HepG2 (cell line): ENCODE measurements at regions of chr18 and their contacts with region 1.

Region 1: GRCh38 chr18:33231474-33232317 is 208.8 kb downstream of the CCDC178 start:
- DNase-seq: peak; percentile 75
- ATAC-seq: peak; percentile 98
- H3K4me3 ChIP-seq: no peak overlapping the region
- H3K27ac ChIP-seq: no peak overlapping the region
- H3K4me1 ChIP-seq: no peaks in the 10 kb centered on the region
- H3K27me3 ChIP-seq: no peaks in the 10 kb centered on the region
- CTCF ChIP-seq: peak; percentile 85
- EP300 ChIP-seq: no peak
- POLR2A ChIP-seq: no peak
- RAD21 ChIP-seq: peak; percentile 46; the same call in 1 of the 2 replicates

Region 2: GRCh38 chr18:33195795-33196194 is 35.9 kb before region 1 on chr18:
- CTCF ChIA-PET with region 1: no interaction called
- POLR2A ChIA-PET with region 1: no interaction called
- in situ Hi-C with region 1: no loop called
- intact Hi-C with region 1: no loop called
- DNase-seq: no peak
- ATAC-seq: no peak
- H3K4me3 ChIP-seq: no peak overlapping the region
- H3K27ac ChIP-seq: no peak overlapping the region
- H3K4me1 ChIP-seq: no peaks in the 10 kb centered on the region
- H3K27me3 ChIP-seq: no peaks in the 10 kb centered on the region
- CTCF ChIP-seq: no peak
- EP300 ChIP-seq: no peak
- POLR2A ChIP-seq: no peak
- RAD21 ChIP-seq: no peak

Region 3: GRCh38 chr18:33316146-33316587 is 84.5 kb after region 1 on chr18:
- CTCF ChIA-PET with region 1: no interaction called
- POLR2A ChIA-PET with region 1: no interaction called
- in situ Hi-C with region 1: no loop called
- intact Hi-C with region 1: loop called (anchors 1 kb)
- DNase-seq: no peak
- ATAC-seq: peak; percentile 77
- H3K4me3 ChIP-seq: no peak overlapping the region
- H3K27ac ChIP-seq: no peak overlapping the region
- H3K4me1 ChIP-seq: no peaks in the 10 kb centered on the region
- H3K27me3 ChIP-seq: no peaks in the 10 kb centered on the region; a peak in 1 of 5 replicates
- CTCF ChIP-seq: peak; percentile 38; the same call in 1 of the 2 replicates
- EP300 ChIP-seq: no peak
- POLR2A ChIP-seq: no peak
- RAD21 ChIP-seq: no peak

Region 4: GRCh38 chr18:33495278-33495677 is 263.6 kb after region 1 on chr18:
- CTCF ChIA-PET with region 1: interaction called, 10 read pairs
- POLR2A ChIA-PET with region 1: no interaction called
- in situ Hi-C with region 1: loop called (anchors 10 kb)
- intact Hi-C with region 1: loop called (anchors 1 kb)
- DNase-seq: peak; percentile 24
- ATAC-seq: peak; percentile 89
- H3K4me3 ChIP-seq: no peak overlapping the region
- H3K27ac ChIP-seq: no peak overlapping the region
- H3K4me1 ChIP-seq: no peaks in the 10 kb centered on the region
- H3K27me3 ChIP-seq: no peaks in the 10 kb centered on the region
- CTCF ChIP-seq: peak; percentile 67
- EP300 ChIP-seq: no peak
- POLR2A ChIP-seq: no peak
- RAD21 ChIP-seq: peak; percentile 31; the same call in 1 of the 2 replicates

Region 5: GRCh38 chr18:33673689-33674088 is 442.0 kb after region 1 on chr18:
- CTCF ChIA-PET with region 1: no interaction called
- POLR2A ChIA-PET with region 1: no interaction called
- in situ Hi-C with region 1: no loop called
- intact Hi-C with region 1: loop called (anchors 10 kb)
- DNase-seq: no peak
- ATAC-seq: no peak
- H3K4me3 ChIP-seq: no peak overlapping the region
- H3K27ac ChIP-seq: no peak overlapping the region
- H3K4me1 ChIP-seq: no peaks in the 10 kb centered on the region
- H3K27me3 ChIP-seq: no peaks in the 10 kb centered on the region
- CTCF ChIP-seq: no peak
- EP300 ChIP-seq: no peak
- POLR2A ChIP-seq: no peak
- RAD21 ChIP-seq: no peak

Region 6: GRCh38 chr18:33761363-33761762 is 529.7 kb after region 1 on chr18:
- CTCF ChIA-PET with region 1: interaction called, 9 read pairs
- POLR2A ChIA-PET with region 1: no interaction called
- in situ Hi-C with region 1: loop called (anchors 25 kb)
- intact Hi-C with region 1: no loop called
- DNase-seq: no peak
- ATAC-seq: 0 out of 3 replicates have a peak, but pooled peaks have one; percentile 36
- H3K4me3 ChIP-seq: no peak overlapping the region
- H3K27ac ChIP-seq: no peak overlapping the region
- H3K4me1 ChIP-seq: no peaks in the 10 kb centered on the region
- H3K27me3 ChIP-seq: no peaks in the 10 kb centered on the region
- CTCF ChIP-seq: no peak
- EP300 ChIP-seq: no peak
- POLR2A ChIP-seq: no peak
- RAD21 ChIP-seq: no peak